Activated CD4-positive, alpha-beta T cell treated with anti-CD3 and anti-CD28 coated beads, Interleukin-2, amount 10 ng/mL, durations not matched to agents 24 days and 14 days (primary cell): ENCODE measurements at regions of chr1 and their contacts with region 1.

Region 1: DNA sequence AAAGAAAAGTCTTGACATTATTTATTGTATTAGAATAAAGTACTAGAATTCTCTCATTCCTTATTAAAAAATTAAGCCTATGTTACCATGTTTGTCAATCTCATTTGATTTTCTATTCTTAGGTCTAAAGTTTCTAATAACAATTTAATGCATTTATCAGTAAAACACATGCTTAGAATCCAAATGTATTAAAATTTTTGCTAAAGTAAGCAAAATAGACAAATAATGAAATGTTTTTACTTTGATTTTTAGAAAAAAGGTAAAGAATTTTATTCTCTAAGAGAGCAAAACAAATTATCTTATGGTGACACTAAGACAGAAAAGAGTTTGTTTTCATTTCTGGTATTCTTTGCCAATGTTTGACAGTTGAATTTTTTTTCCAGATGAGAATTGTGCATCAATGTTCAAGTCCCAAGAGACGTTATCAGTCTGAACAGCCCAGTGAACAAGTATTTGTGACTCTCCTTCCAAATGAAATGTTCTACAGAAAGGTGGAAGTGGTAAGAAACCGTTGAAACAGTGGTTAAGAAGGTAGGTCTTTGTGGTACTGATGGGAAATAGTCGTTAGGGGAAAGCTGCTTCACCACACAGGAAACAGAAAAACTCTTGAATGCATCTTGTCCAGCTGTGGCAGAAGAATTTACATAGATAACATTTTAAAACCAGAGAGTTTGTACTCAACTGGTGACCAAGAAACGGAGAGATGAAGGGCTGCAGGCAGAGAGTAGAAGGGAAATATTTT is 402.5 kb downstream of the PTPRC start:
- DNase-seq: peak; percentile 88
- H3K4me3 Mint-ChIP-seq: peak overlapping the region; percentile 59
- H3K27ac Mint-ChIP-seq: peak overlapping the region; percentile 87
- H3K4me1 Mint-ChIP-seq: peaks cover 37% of the 10 kb centered on the region
- H3K27me3 Mint-ChIP-seq: no peaks in the 10 kb centered on the region

Region 2: DNA sequence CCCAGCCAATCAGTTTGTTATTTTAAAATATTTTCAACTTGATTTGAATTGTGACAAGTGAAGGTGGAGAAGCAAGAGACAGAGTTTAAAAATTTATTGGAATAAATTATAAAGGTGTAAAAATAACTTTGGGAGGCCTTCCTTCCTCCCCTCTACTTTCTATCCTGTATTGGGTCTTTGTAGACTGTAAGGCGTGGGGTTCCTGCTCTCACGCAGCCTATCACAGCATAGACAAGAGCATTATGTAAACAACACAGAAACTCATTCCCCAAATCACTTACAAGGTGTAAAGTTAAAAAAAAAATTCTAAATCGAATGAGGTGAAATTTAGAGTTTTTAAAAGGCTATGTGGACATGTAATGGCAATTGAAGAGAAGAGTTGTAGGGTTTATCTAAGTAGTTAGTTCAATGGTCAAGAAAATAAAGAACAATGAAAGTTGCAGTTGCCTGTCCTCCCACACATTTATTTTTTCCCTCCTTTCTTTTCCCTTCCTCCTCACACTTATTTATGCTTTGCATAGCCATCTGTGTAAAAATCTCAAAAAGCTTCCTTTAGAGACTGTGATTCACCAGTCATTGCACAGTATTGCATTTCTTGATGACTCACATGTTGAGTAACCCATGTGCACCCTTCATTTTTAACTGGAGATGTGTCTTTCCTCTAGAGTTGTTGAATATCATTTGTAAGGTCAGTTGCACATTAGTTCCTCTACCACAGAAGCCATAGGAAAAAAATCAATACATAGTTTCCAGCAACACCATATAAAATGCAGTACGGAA is 160.3 kb before region 1 on chr1:
- intact Hi-C with region 1: loop called (anchors 1 kb)
- DNase-seq: no peak
- H3K4me3 Mint-ChIP-seq: peak overlapping the region; percentile 23
- H3K27ac Mint-ChIP-seq: peak overlapping the region; percentile 86
- H3K4me1 Mint-ChIP-seq: peaks cover 34% of the 10 kb centered on the region
- H3K27me3 Mint-ChIP-seq: no peaks in the 10 kb centered on the region

Region 3: DNA sequence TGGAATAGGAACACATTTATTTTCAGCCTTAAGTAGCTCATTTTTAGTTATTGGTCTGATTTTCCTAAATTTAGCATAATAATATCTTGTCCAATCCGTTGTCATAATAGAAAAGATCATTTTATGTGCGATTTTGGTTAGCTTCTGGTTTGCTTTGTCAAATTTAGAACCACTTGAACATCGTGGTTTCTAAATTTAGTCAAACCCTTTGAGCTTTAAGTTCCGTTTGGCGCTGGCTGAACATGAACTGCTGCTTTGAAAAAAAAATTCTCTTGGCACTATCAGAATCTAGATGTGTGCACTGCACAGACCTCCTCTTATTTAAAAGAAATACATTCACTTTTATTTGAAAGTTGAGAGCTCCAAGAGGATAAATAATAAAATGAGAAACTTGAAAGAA is 31.9 kb before region 1 on chr1:
- intact Hi-C with region 1: loop called (anchors 1 kb)
- DNase-seq: peak; percentile 71
- H3K4me3 Mint-ChIP-seq: peak overlapping the region; percentile 50
- H3K27ac Mint-ChIP-seq: peak overlapping the region; percentile 62
- H3K4me1 Mint-ChIP-seq: peaks cover 43% of the 10 kb centered on the region
- H3K27me3 Mint-ChIP-seq: peaks cover 2% of the 10 kb centered on the region

Region 4: DNA sequence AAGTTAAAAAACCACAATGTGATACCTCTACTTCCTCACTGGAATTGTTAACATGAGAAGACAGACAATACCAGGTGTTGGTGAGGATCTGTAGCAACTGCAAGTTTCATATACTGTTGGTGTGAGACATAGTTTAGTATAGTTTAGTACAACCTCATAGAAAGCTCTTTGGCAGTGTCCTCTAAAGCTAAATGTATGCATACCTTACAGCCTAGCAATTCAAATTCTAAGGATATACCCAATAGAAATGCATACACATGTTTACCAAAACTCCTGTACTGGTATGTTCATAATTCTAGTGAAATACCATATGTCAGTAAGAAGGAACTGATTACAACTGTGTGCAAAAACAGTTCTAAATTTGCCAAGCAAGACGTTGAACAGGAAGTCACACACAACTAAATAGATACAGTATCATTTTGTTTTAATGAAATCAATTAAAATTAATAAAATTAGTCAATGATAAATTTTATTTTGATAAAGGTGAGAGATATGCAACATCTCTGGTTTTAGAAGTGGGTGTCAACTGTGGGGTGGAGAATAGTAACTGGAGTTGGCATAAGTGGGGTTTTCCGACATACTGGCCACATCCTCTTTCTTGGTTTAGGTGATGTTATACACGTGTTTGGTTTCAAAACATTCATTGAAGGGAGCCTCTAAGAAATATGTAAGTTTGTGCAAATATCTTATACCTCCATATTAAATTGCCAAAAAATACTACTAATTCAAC is 48.2 kb after region 1 on chr1:
- intact Hi-C with region 1: loop called (anchors 2 kb)
- DNase-seq: peak; percentile 87
- H3K4me3 Mint-ChIP-seq: peak overlapping the region; percentile 49
- H3K27ac Mint-ChIP-seq: peak overlapping the region; percentile 67
- H3K4me1 Mint-ChIP-seq: peaks cover 36% of the 10 kb centered on the region
- H3K27me3 Mint-ChIP-seq: no peaks in the 10 kb centered on the region

Region 5: GRCh38 chr1:199157494-199157893 is 116.2 kb after region 1 on chr1:
- intact Hi-C with region 1: no loop called
- DNase-seq: no peak
- H3K4me3 Mint-ChIP-seq: no peak overlapping the region
- H3K27ac Mint-ChIP-seq: no peak overlapping the region
- H3K4me1 Mint-ChIP-seq: peaks cover 17% of the 10 kb centered on the region
- H3K27me3 Mint-ChIP-seq: peaks cover 8% of the 10 kb centered on the region

Region 6: GRCh38 chr1:199226163-199226562 is 184.8 kb after region 1 on chr1:
- intact Hi-C with region 1: loop called (anchors 5 kb)
- DNase-seq: peak; percentile 80
- H3K4me3 Mint-ChIP-seq: peak overlapping the region; percentile 47
- H3K27ac Mint-ChIP-seq: peak overlapping the region; percentile 48
- H3K4me1 Mint-ChIP-seq: peaks cover 14% of the 10 kb centered on the region
- H3K27me3 Mint-ChIP-seq: no peaks in the 10 kb centered on the region

Region 7: GRCh38 chr1:199243423-199244061 is 202.2 kb after region 1 on chr1:
- intact Hi-C with region 1: no loop called
- DNase-seq: peak; percentile 93
- H3K4me3 Mint-ChIP-seq: no peak overlapping the region
- H3K27ac Mint-ChIP-seq: no peak overlapping the region
- H3K4me1 Mint-ChIP-seq: peaks cover 19% of the 10 kb centered on the region
- H3K27me3 Mint-ChIP-seq: peaks cover 24% of the 10 kb centered on the region